ENCODE measurements at regions of chr1 and their contacts with region 1.

Region 1: DNA sequence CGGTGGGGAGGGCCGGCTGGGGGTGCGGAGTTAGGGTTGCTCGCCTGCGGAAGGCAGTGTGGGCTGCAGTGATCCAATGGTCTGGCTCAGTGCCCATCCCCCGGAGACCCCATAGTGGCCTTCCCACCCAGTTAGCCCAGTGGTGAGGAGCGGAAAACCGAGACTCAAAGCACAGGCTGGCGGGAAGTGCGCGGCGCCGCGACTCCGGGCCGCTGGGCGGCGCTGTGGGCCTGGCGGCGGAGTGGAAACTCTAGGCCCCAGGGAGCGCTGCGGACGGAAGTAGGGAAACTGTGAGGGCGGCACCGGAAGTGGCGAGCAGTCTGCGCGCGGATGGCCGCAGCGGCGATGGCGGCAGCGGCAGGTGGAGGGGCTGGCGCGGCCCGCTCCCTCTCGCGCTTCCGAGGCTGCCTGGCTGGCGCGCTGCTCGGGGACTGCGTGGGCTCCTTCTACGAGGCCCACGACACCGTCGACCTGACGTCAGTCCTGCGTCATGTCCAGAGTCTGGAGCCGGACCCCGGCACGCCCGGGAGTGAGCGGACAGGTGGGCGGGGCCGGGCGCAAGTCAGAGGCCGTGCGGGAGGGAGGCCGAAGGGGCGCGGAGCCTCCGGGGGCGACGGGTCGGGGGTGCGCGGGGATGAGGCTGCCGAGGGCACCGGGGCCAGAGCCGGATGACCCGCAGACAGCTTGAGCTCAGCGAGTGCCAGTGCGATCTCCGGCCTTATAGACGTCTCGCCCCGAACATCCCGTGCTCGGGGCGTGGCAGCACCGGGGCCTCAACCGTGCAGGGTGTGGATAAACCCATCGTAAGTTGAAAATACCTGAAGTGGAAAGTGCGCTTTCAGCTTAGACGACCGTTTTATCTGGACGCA is at the start of gene ADPRS:
- DNase-seq: peak; percentile 83 to 96 (median 88)
- ATAC-seq: peak; percentile 88
- H3K4me3 ChIP-seq: peak within 1 kb of the TSS; percentile 95
- H3K4me3 Mint-ChIP-seq: peak within 1 kb of the TSS; percentile 93
- H3K27ac ChIP-seq: peak within 1 kb of the TSS; percentile 73 to 83
- H3K27ac Mint-ChIP-seq: peak within 1 kb of the TSS; percentile 86
- H3K4me1 ChIP-seq: peaks cover 54% of the 10 kb centered on the region
- H3K4me1 Mint-ChIP-seq: peaks cover 23% of the 10 kb centered on the region
- H3K27me3 ChIP-seq: peaks cover 13 to 14% of the 10 kb centered on the region in 2 experiments
- H3K27me3 Mint-ChIP-seq: peaks cover 21% of the 10 kb centered on the region
- CTCF ChIP-seq: peak; percentile 96
- total RNA-seq, gene ADPRS: 22.6 to 24.6 TPM

Region 2: DNA sequence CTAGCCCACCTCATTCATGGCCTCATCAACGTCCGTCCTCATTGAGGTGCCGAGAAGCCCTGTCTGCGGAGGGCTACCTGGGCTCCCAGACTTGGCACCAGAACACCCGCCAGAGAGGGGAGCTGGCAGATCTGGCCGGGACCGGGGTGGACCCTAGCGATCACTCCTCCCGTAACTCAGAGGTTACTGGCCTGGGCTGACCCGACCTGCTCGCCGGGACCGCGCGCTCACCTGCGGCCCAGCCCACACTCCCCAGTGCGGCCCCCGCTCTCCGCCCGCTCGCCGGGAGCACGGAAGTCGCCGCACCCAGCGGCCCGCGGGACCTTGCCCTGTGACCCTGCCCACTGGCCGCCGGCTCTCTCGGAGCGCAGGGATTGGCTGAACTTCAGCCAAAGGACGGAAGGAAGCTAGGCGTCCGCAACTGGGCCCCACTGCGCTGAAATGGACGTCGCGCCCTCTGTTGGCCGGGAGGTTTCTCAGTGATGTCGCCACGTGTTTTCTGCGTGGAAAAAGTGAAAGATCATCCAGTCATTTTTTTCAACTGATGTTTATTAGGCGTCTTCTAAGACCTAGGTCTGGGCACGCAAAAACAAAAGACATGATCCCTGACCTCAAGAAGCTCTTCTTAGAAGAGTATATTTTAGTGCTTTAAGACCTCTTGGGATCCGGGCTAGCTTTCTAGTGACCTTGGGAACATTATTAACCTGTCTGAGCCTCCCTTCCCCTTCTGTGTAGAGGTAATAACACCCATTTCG is 1229.2 kb before region 1 on chr1 and contains the start of gene SMIM12:
- CTCF ChIA-PET with region 1: no interaction called
- POLR2A ChIA-PET with region 1: no interaction called
- intact Hi-C with region 1: loop called in 1 of 2 experiments (anchors 10 kb)
- DNase-seq: peak; percentile 75 to 94 (median 88)
- ATAC-seq: peak; percentile 83
- H3K4me3 ChIP-seq: peak within 1 kb of the TSS; percentile 98
- H3K4me3 Mint-ChIP-seq: peak within 1 kb of the TSS; percentile 93
- H3K27ac ChIP-seq: peak within 1 kb of the TSS; percentile 80 to 91
- H3K27ac Mint-ChIP-seq: peak within 1 kb of the TSS; percentile 88
- H3K4me1 ChIP-seq: peaks cover 48% of the 10 kb centered on the region
- H3K4me1 Mint-ChIP-seq: peaks cover 68% of the 10 kb centered on the region
- H3K27me3 ChIP-seq: no peaks in the 10 kb centered on the region
- H3K27me3 Mint-ChIP-seq: no peaks in the 10 kb centered on the region
- CTCF ChIP-seq: peak; percentile 83
- total RNA-seq, gene SMIM12: 43.0 to 44.6 TPM

Region 3: GRCh38 chr1:35864813-35865212 is 224.0 kb before region 1 on chr1:
- CTCF ChIA-PET with region 1: no interaction called
- POLR2A ChIA-PET with region 1: no interaction called
- intact Hi-C with region 1: no loop called
- DNase-seq: no peak
- ATAC-seq: no peak
- H3K4me3 ChIP-seq: no peak overlapping the region
- H3K4me3 Mint-ChIP-seq: no peak overlapping the region
- H3K27ac ChIP-seq: no peak overlapping the region
- H3K27ac Mint-ChIP-seq: no peak overlapping the region
- H3K4me1 ChIP-seq: no peaks in the 10 kb centered on the region
- H3K4me1 Mint-ChIP-seq: no peaks in the 10 kb centered on the region
- H3K27me3 ChIP-seq: no peaks in the 10 kb centered on the region
- H3K27me3 Mint-ChIP-seq: no peaks in the 10 kb centered on the region
- CTCF ChIP-seq: no peak

Region 4: DNA sequence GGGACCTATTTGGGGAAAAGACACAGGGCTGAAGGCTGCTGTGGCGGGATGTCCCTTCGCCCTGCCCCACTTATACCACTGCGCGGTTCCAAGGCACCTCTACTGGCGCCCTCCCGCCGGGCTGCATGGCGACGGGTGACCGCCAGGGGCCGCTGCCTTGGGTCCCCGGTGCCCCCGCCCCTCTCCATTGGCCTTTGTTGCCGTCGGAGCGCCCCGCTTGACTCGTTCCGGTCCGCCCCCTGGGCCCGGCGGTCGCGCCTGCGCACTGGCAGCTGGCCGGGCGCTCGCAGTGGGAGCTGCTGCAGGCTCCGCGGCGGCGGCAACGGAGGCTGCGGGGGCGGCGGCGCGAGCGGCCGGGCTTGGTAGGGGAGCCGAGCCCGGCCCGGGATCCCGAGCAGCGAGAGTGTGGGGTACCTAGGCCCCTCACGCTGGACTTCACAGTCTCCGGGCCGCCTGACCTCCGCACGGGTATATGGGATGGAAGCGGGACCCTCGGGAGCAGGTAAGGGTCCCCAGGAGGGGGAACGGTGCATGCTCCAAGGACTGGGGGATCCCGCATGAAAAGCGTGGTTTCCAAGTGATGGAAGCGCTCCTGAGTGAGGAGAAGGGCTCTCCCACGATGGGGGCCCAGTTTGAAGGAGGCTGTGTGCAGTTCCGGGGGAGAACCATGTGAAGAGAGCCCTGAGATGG is 205.7 kb before region 1 on chr1 and contains the start of gene AGO1:
- CTCF ChIA-PET with region 1: no interaction called
- POLR2A ChIA-PET with region 1: no interaction called
- intact Hi-C with region 1: loop called in 1 of 2 experiments (anchors 2 kb)
- DNase-seq: peak; percentile 94 to 98 (median 97)
- ATAC-seq: peak; percentile 98
- H3K4me3 ChIP-seq: peak within 1 kb of the TSS; percentile 100
- H3K4me3 Mint-ChIP-seq: peak within 1 kb of the TSS; percentile 95
- H3K27ac ChIP-seq: peak within 1 kb of the TSS; percentile 41 to 55
- H3K27ac Mint-ChIP-seq: peak within 1 kb of the TSS; percentile 69
- H3K4me1 ChIP-seq: peaks cover 39% of the 10 kb centered on the region
- H3K4me1 Mint-ChIP-seq: peaks cover 57% of the 10 kb centered on the region
- H3K27me3 ChIP-seq: no peaks in the 10 kb centered on the region
- H3K27me3 Mint-ChIP-seq: no peaks in the 10 kb centered on the region
- CTCF ChIP-seq: peak; percentile 90
- total RNA-seq, gene AGO1: 15.2 to 16.3 TPM

Region 5: GRCh38 chr1:35930593-35931445 is 158.0 kb before region 1 on chr1 and contains the start of gene AGO3:
- CTCF ChIA-PET with region 1: no interaction called
- POLR2A ChIA-PET with region 1: interaction called, 5 read pairs
- intact Hi-C with region 1: loop called in 1 of 2 experiments (anchors 2 kb)
- DNase-seq: peak; percentile 73 to 96 (median 80)
- ATAC-seq: peak; percentile 79
- H3K4me3 ChIP-seq: peak within 1 kb of the TSS; percentile 78
- H3K4me3 Mint-ChIP-seq: peak within 1 kb of the TSS; percentile 94
- H3K27ac ChIP-seq: peak within 1 kb of the TSS; percentile 91 to 97
- H3K27ac Mint-ChIP-seq: peak within 1 kb of the TSS; percentile 96
- H3K4me1 ChIP-seq: peaks cover 19% of the 10 kb centered on the region
- H3K4me1 Mint-ChIP-seq: peaks cover 44% of the 10 kb centered on the region
- H3K27me3 ChIP-seq: no peaks in the 10 kb centered on the region
- H3K27me3 Mint-ChIP-seq: no peaks in the 10 kb centered on the region
- CTCF ChIP-seq: no peak
- total RNA-seq, gene AGO3: 31.3 to 34.5 TPM

Region 6: GRCh38 chr1:36008546-36009197 is 80.1 kb before region 1 on chr1:
- CTCF ChIA-PET with region 1: no interaction called
- POLR2A ChIA-PET with region 1: no interaction called
- intact Hi-C with region 1: loop called in 1 of 2 experiments (anchors 10 kb)
- DNase-seq: no peak
- ATAC-seq: no peak
- H3K4me3 ChIP-seq: no peak overlapping the region
- H3K4me3 Mint-ChIP-seq: no peak overlapping the region
- H3K27ac ChIP-seq: no peak overlapping the region
- H3K27ac Mint-ChIP-seq: no peak overlapping the region
- H3K4me1 ChIP-seq: no peaks in the 10 kb centered on the region
- H3K4me1 Mint-ChIP-seq: no peaks in the 10 kb centered on the region
- H3K27me3 ChIP-seq: no peaks in the 10 kb centered on the region
- H3K27me3 Mint-ChIP-seq: no peaks in the 10 kb centered on the region
- CTCF ChIP-seq: no peak

Region 7: DNA sequence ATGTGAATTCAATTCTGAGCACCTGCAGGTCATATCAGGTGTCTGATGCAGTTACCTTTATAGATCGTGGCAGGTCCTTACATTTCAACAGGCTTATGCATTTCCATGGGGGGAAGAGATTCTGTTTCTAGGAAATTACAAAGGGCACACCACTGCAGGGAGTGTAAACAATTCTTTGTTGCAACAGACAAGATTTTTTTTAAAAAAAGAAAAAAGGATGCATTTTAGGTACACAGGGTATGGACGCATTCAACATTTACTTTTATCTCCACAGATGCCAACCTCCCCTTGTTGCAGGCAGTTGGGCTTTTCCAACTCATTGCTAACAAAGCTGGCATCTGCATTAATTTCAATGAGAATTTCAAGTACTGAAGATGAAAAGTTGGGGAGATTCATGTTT is 18.5 kb before region 1 on chr1:
- CTCF ChIA-PET with region 1: no interaction called
- POLR2A ChIA-PET with region 1: no interaction called
- intact Hi-C with region 1: no loop called
- DNase-seq: no peak
- ATAC-seq: no peak
- H3K4me3 ChIP-seq: no peak overlapping the region
- H3K4me3 Mint-ChIP-seq: no peak overlapping the region
- H3K27ac ChIP-seq: no peak overlapping the region
- H3K27ac Mint-ChIP-seq: no peak overlapping the region
- H3K4me1 ChIP-seq: no peaks in the 10 kb centered on the region
- H3K4me1 Mint-ChIP-seq: no peaks in the 10 kb centered on the region
- H3K27me3 ChIP-seq: no peaks in the 10 kb centered on the region
- H3K27me3 Mint-ChIP-seq: no peaks in the 10 kb centered on the region
- CTCF ChIP-seq: no peak

Region 8: GRCh38 chr1:36385410-36386257 is 296.8 kb after region 1 on chr1 and contains the start of gene STK40:
- CTCF ChIA-PET with region 1: no interaction called
- POLR2A ChIA-PET with region 1: no interaction called
- intact Hi-C with region 1: loop called in 1 of 2 experiments (anchors 5 kb)
- DNase-seq: peak; percentile 97 to 99 (median 98)
- ATAC-seq: peak; percentile 84
- H3K4me3 ChIP-seq: peak within 1 kb of the TSS; percentile 72
- H3K4me3 Mint-ChIP-seq: peak within 1 kb of the TSS; percentile 89
- H3K27ac ChIP-seq: peak within 1 kb of the TSS; percentile 92
- H3K27ac Mint-ChIP-seq: peak within 1 kb of the TSS; percentile 98
- H3K4me1 ChIP-seq: peaks cover 56% of the 10 kb centered on the region
- H3K4me1 Mint-ChIP-seq: peaks cover 59% of the 10 kb centered on the region
- H3K27me3 ChIP-seq: no peaks in the 10 kb centered on the region
- H3K27me3 Mint-ChIP-seq: no peaks in the 10 kb centered on the region
- CTCF ChIP-seq: no peak
- total RNA-seq, gene STK40: 17.8 to 20.7 TPM

Region 9: DNA sequence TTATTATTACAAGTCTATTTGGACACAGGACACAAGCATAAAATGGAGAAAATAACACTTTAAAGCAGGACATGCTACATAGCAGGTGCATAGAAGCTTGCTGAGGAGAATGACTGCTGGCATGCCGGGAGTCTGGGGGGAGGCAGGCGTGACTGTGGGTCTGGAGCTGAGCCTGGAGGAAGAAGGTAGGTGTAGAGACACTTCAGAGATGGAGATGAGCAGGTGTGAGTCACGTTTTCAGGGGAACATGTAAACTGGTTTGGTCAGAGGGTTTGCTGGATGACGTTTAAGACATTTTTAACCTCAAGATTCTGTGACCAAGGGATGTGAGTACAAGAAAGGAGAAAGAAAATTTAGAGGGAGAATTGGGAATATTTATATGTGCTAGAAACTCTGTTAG is 337.0 kb after region 1 on chr1:
- CTCF ChIA-PET with region 1: no interaction called
- POLR2A ChIA-PET with region 1: no interaction called
- intact Hi-C with region 1: no loop called
- DNase-seq: no peak
- ATAC-seq: no peak
- H3K4me3 ChIP-seq: no peak overlapping the region
- H3K4me3 Mint-ChIP-seq: no peak overlapping the region
- H3K27ac ChIP-seq: no peak overlapping the region
- H3K27ac Mint-ChIP-seq: no peak overlapping the region
- H3K4me1 ChIP-seq: peaks cover 7% of the 10 kb centered on the region
- H3K4me1 Mint-ChIP-seq: peaks cover 8% of the 10 kb centered on the region
- H3K27me3 ChIP-seq: no peaks in the 10 kb centered on the region
- H3K27me3 Mint-ChIP-seq: no peaks in the 10 kb centered on the region
- CTCF ChIP-seq: no peak

Region 10: DNA sequence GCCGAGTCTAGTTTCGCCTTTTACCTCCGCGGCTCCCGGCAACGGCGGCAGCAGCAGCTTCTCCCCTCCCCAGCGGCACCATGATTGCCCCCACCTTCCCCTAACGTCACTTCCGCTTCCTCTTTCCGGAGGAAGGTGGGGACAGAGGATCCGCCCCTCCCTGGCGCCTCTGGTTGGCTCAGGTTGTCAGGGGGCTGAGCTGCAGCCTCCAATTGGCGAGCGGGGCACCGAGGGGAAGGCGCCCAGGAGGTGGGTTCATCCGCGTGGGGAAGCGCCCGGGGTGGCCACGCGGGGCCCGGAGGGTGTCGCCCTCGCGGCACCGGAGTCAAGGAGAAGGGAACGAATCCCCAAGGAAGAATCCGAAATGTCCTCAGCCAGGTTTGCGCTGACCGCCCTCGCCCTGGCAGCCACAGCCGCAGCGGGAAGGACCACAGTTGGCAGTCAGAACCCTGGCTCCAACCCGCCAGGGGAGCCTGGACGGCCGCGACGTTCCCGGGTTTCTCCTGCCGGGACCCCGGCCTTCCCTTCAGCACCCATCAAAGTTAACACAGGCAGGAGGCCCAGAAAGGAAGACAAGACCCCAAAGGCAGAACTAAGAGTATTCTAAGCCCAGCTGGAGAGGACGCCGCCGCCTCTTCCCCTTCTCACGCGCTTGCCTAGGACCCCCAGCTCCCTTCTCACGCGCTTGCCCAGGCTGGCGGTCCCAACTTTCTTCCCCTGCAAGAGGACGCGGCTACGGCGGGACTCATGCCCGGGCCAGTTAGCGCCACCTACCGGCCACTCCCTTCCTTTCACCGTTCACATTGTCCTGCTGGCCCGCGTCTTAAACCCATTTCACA is 1770.9 kb after region 1 on chr1 and contains the start of gene MTF1:
- CTCF ChIA-PET with region 1: no interaction called
- POLR2A ChIA-PET with region 1: no interaction called
- intact Hi-C with region 1: loop called in 1 of 2 experiments (anchors 5 kb)
- DNase-seq: peak; percentile 91 to 99 (median 95)
- ATAC-seq: peak; percentile 98
- H3K4me3 ChIP-seq: peak within 1 kb of the TSS; percentile 88
- H3K4me3 Mint-ChIP-seq: peak within 1 kb of the TSS; percentile 98
- H3K27ac ChIP-seq: peak within 1 kb of the TSS; percentile 81 to 91
- H3K27ac Mint-ChIP-seq: peak within 1 kb of the TSS; percentile 87
- H3K4me1 ChIP-seq: peaks cover 18% of the 10 kb centered on the region
- H3K4me1 Mint-ChIP-seq: peaks cover 41% of the 10 kb centered on the region
- H3K27me3 ChIP-seq: no peaks in the 10 kb centered on the region
- H3K27me3 Mint-ChIP-seq: no peaks in the 10 kb centered on the region
- CTCF ChIP-seq: peak; percentile 91
- total RNA-seq, gene MTF1: 28.1 to 31.2 TPM